HEK293 (cell line): ENCODE measurements at regions of chr12 and their contacts with region 1.

Region 1: DNA sequence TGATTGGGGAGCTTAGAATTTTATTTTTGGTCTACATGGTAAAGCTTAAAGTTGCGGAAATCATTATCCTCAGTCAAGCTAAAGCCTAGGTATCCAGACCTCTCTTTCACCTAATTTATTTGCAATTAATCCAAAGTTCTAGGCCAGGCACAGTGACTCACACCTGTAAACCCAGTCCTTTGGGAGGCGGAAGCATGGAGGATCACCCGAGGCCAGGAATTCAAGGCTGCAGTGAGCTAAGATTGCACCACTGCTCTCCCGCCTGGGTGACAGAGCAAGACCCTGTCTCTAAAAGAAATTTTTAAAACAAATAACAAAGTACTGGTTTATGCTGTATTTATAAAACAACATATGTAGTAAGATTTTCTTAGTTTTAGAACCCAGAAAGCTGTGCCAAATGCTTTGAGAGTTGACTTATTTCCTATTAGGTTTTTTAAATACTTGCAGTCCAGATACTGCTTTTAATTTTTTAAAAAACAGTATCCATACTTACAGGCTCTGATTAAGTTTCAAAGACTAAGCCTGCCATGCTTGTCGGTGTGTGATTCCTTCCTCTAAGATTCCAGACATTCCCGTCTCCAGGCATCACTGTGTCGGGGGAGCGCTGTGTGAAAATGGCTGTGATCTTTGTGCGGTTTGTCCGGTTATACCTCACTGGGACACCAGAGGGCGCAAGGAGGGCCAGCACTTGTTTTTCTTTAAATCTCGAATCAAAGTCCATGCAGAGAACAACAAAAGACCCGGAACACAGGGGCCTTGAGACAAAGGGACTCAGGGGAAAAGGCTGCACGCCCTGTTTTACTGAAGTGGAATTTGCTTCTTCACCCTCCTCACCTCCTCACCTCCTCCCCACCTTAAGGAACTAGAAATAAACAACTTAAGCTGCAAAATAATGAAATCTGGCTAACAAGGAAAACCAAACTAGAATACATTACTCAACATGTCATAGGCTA is 24.6 kb upstream of the TMPO start:
- H3K4me3 ChIP-seq: peak overlapping the region; percentile 12; the same call in 1 of the 2 replicates
- H3K27ac ChIP-seq: no peak overlapping the region
- H3K4me1 ChIP-seq: no peaks in the 10 kb centered on the region; the same call in 1 of the 2 replicates
- CTCF ChIP-seq: peak; percentile 86

Region 2: DNA sequence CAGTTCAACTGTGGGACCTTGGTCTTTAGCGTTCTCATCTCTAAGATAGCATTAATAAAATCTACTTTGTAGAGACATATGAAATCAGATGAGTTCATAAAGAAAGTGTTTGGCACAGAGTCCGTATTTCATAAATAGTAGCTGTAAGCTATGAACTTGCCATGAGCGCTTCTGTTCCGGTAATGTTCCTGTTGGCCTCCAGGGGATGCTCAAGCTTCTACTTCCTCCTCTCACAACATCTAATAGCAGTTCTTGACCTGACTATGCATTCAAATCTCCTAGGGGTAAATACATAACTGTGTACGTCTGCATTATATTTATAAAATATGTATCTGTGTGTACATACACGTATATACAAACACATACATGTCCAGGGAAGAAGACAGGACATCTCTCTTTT is 263.6 kb before region 1 on chr12:
- CTCF ChIA-PET with region 1: no interaction called
- POLR2A ChIA-PET with region 1: no interaction called
- H3K4me3 ChIP-seq: no peak overlapping the region
- H3K27ac ChIP-seq: no peak overlapping the region
- H3K4me1 ChIP-seq: no peaks in the 10 kb centered on the region
- CTCF ChIP-seq: no peak

Region 3: DNA sequence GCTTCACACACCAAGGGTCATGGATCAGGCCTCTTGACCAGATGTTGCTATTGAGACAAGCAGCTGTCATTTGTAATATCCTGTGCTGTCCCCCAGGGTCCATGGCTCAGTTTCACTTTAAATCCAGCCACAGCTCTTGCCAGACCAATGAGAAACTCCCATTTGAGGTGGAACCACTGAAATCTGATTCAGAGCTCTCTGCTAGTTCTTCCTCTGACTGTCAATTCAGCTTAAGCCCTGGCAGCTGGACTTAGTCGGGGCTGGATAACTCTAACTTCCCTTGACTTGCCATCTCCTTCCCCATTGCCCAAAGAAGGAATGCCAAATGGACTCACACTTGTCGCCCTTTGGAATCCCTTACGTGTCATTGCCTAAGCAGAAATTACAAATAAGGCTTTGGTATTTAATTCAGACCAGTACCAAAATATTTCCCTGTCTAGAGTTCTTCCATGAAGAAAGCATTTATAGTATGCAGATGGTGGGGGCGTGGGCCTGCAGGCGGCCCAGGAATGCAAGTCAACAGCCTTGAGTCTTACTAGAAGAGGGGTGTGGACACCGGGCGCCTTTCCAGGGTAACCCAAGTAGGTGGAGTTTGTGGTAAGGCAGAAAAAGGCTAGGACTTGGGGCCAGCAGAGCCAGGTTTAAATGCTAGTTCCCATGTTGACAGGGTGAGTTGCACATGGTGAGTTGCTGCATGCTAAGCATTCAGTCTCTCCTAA is 72.3 kb before region 1 on chr12:
- CTCF ChIA-PET with region 1: interaction called, 18 read pairs
- POLR2A ChIA-PET with region 1: no interaction called
- H3K4me3 ChIP-seq: no peak overlapping the region
- H3K27ac ChIP-seq: no peak overlapping the region
- H3K4me1 ChIP-seq: no peaks in the 10 kb centered on the region
- CTCF ChIP-seq: no peak

Region 4: DNA sequence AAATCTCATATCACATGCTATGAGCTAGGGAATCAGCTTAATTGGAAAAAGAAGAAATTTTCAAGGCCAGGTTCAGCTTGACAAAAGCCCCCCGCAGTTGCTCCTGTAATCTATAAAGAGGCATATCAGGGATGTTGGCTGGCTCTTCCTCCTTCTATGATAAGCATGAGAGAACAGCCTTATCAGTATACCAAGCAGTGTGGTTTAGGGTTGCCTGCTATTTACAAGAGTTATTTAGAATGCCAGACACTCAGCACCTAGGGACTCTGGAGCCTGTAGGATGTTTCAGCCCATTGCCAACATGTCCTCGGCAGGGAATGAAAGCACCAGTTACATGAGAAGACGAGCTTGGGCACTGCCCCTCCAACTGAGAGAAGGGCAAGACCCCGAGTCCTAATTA is 64.9 kb before region 1 on chr12:
- CTCF ChIA-PET with region 1: interaction called, 11 read pairs
- POLR2A ChIA-PET with region 1: no interaction called
- H3K4me3 ChIP-seq: no peak overlapping the region
- H3K27ac ChIP-seq: no peak overlapping the region
- H3K4me1 ChIP-seq: no peaks in the 10 kb centered on the region
- CTCF ChIP-seq: no peak

Region 5: GRCh38 chr12:98470469-98471082 is 20.2 kb before region 1 on chr12:
- CTCF ChIA-PET with region 1: interaction called, 19 read pairs
- POLR2A ChIA-PET with region 1: interaction called, 7 read pairs
- H3K4me3 ChIP-seq: no peak overlapping the region
- H3K27ac ChIP-seq: no peak overlapping the region
- H3K4me1 ChIP-seq: no peaks in the 10 kb centered on the region
- CTCF ChIP-seq: no peak

Region 6: GRCh38 chr12:98503592-98504367 is 13.0 kb after region 1 on chr12:
- CTCF ChIA-PET with region 1: interaction called, 20 read pairs
- POLR2A ChIA-PET with region 1: interaction called, 5 read pairs
- H3K4me3 ChIP-seq: peak overlapping the region; percentile 96
- H3K27ac ChIP-seq: peak overlapping the region; percentile 85
- H3K4me1 ChIP-seq: peaks cover 3% of the 10 kb centered on the region; the same call in 1 of the 2 replicates
- CTCF ChIP-seq: peak; percentile 14; the same call in 1 of the 2 replicates